Adrenal gland (tissue), 19 donors: ENCODE measurements at regions of chr4 and their contacts with region 1.

Region 1: GRCh38 chr4:184538023-184538599 is 63.8 kb upstream of the IRF2 start:
- DNase-seq: peak; percentile 88 to 97 (median 93)
- H3K4me3 ChIP-seq: peak overlapping the region in 3 of 4 donors; percentile 27 to 77 (median 67)
- H3K27ac ChIP-seq: peak overlapping the region; percentile 78 to 98 (median 94)
- H3K4me1 ChIP-seq: peaks cover 27 to 44% of the 10 kb centered on the region in 2 donors
- H3K27me3 ChIP-seq: no peaks in the 10 kb centered on the region
- CTCF ChIP-seq: peak; percentile 29 to 90 (median 84)
- POLR2A ChIP-seq: no peak

Region 2: DNA sequence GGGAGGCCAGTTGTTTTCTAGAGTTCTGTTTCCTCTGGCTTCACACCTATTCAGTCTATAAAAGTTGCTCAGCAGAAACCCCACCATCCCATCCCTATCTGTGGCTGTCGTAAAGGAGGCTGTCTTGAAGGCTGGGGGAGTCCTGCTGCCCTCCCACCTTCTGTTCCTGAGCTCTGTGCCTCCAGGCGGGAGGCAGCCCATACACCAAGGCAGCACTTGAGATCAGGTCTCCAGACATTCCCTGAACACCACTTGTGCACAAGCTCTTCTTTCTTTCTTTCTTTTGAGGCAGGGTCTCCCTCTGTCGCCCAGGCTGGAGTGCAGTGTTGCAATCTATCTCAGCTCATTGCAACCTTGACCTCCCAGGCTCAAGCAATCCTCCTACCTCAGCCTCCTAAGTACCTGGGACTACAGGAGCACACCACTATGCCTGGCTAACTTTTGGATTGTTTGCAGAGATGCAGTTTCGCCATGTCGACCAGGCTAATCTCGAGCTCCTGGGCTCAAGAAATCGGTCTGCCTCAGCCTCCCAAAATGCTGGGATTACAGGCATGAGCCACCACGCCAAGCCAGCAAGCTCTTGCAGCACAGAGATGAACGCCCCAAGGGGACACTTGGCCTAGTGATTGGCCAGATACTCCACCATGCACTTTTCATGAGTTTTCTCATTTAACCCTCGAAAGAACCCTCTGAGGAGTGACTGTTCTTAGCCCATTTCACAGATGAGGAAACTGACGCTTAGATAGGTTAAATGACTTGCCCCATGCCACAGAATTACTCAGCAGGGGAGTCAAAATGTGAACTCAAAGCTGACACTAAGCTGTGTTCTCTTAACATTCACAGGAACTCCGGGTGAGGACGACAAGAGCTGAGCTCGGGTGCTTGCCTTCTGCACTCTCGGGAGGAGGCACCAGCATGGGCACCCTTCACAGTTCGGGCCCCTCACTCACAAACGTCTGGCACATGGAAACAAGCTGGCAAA is 264.7 kb before region 1 on chr4:
- intact Hi-C with region 1: loop called in 1 of 2 experiments (anchors 5 kb)
- DNase-seq: peak in 2 of 7 donors; percentile 13 to 43
- H3K4me3 ChIP-seq: no peak overlapping the region
- H3K27ac ChIP-seq: no peak overlapping the region
- H3K4me1 ChIP-seq: peaks cover 0 to 6% of the 10 kb centered on the region in 2 donors
- H3K27me3 ChIP-seq: no peaks in the 10 kb centered on the region
- CTCF ChIP-seq: no peak
- POLR2A ChIP-seq: no peak

Region 3: DNA sequence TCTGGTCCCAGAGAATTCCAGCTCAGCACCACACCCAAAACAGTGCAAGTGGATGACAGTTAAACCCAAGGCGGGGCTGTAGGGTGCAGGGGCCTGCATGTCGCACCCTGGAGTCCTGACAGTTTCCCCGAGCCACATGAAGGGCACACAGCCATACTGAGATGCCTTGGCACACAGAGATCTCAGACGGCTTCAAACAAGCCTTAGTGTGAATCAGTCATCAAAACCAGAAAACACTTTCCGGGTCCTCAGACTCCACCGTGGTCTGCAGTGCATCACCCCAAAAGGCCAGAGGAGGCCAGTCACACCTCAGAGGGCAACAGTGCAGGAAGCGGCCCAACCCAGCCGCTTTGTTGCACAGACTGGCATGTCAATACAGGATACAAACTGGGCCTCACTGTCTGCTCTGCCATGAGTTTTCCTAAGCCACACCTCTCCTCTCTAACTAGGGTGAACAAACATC is 255.8 kb before region 1 on chr4:
- intact Hi-C with region 1: loop called in 1 of 2 experiments (anchors 5 kb)
- DNase-seq: peak in 1 of 7 donors; percentile 48
- H3K4me3 ChIP-seq: no peak overlapping the region
- H3K27ac ChIP-seq: no peak overlapping the region
- H3K4me1 ChIP-seq: peaks cover under 1 to 11% of the 10 kb centered on the region in 2 donors
- H3K27me3 ChIP-seq: no peaks in the 10 kb centered on the region
- CTCF ChIP-seq: no peak
- POLR2A ChIP-seq: no peak

Region 4: DNA sequence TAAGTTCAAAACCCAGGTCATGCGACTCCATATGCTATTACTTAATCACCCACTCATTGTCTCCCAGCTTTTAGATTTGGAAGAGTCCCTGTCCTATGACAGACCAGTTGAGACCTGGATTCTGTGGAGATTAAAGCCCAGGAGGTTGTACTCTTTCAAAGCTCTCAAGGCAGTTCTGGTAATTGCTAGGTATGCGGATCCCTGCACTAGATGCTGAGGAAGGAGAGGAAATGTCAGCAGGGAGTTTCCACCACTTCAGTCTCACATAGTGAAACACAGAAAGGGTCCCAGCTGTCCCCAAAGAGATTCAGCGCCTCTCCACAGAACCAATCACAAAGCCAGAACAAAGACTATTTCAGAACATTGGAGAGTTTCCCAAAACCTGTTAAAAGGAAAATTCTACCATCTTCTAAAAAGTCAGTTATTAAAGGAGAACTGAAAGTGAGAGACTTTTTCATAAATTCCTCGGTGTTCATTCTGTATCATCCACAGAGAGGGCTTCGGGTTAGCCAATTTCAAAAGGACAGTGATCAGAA is 117.2 kb before region 1 on chr4:
- intact Hi-C with region 1: no loop called
- DNase-seq: no peak
- H3K4me3 ChIP-seq: no peak overlapping the region
- H3K27ac ChIP-seq: peak overlapping the region in 1 of 5 donors; percentile 10
- H3K4me1 ChIP-seq: peaks cover 22 to 49% of the 10 kb centered on the region in 2 donors
- H3K27me3 ChIP-seq: no peaks in the 10 kb centered on the region
- CTCF ChIP-seq: no peak
- POLR2A ChIP-seq: no peak

Region 5: DNA sequence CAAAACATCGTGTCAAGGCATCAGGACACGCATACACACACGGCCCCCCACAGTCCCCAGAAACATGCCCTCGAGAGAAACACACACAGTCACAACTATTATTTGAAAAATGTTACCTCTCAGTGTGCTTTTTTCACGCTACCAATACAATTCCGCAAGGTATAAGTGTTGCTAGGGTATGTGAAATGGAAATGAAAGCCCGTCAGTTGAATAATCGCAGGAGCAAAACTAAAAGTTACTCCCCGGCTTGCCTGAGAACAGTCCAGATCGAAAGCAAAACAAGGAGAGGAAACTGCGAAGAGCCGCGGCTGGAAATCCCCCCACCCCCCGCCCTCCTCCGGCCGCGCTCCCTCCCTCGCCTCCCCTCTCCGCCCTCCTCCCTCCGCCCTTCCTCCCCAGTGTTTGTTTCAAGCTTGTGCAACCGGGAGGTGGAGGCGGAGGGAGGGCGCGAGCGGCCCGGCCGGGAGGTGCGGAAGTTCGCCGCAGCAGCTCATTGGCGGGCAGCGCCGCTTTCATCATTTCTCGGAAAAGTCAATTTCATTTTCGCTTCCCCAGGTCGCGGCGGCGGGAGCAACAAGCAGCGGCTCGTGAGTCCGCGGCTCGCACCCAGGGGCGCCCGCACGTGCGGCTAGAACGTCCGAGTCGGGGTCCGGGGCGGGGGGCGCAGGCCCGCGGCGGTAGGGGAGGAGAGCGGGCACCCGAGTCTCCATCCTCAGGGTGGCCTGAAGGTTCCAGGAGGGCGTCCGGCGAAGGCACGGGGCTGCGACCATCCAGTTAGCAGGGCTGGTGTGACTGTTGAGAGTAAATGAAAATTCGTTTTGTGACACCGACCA is 63.6 kb before region 1 on chr4 and contains the start of gene IRF2:
- intact Hi-C with region 1: loop called (anchors 5 to 10 kb)
- DNase-seq: peak; percentile 97 to 99 (median 98)
- H3K4me3 ChIP-seq: peak within 1 kb of the TSS; percentile 74 to 98 (median 89)
- H3K27ac ChIP-seq: peak within 1 kb of the TSS; percentile 96 to 99 (median 99)
- H3K4me1 ChIP-seq: peaks cover 30 to 56% of the 10 kb centered on the region in 2 donors
- H3K27me3 ChIP-seq: no peaks in the 10 kb centered on the region
- CTCF ChIP-seq: peak in 3 of 6 experiments; percentile 33 to 50 (median 36)
- POLR2A ChIP-seq: peak; percentile 86 to 97
- total RNA-seq, gene IRF2: 34.6 to 93.1 (median 57.1) TPM